ENCODE measurements at regions of chr4 and their contacts with region 1.

Region 1: GRCh38 chr4:158850800-158851644 is 82.2 kb downstream of the FNIP2 start:
- DNase-seq: no peak
- ATAC-seq: peak; percentile 28

Region 2: GRCh38 chr4:158729716-158730559 is 121.1 kb before region 1 on chr4:
- intact Hi-C with region 1: loop called (anchors 5 kb)
- DNase-seq: peak; percentile 67
- ATAC-seq: peak; percentile 98

Region 3: GRCh38 chr4:159027535-159027934 is 176.5 kb after region 1 on chr4:
- intact Hi-C with region 1: no loop called
- DNase-seq: no peak
- ATAC-seq: no peak

Measured in Right ventricle myocardium superior (tissue), 1 donor.